ENCODE measurements at regions of chr14 and their contacts with region 1.

Region 1: DNA sequence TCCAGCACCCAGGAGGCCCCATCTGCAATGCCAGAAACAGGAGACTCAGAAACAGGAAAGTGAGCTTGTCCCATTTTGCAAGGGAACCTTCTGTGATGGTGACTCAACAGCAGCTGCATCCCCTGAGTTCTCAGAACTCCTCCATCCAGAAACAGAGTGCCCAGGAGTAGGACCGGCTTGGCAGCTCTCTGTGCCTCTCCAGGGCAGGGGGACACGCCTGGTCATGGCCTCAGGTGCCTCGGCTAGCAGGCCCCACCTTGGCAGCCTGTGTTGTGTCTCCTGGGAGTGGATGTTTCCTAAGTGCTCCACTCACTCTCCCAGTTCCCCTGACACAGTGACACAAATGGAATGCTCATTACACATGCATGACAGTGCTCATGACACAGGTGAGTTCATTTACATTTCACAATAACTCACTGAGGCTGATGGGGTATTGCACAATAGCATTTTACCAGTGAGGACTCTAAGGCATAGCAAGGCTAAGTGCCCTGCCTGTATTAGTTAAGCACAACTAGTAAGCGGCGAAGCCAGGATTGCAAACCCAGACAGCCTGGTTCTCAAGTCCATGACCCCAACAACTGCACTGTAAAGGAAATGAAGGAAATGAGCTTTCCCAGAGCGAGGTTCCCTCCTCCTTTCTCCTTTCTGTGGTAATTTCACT is 47.3 kb downstream of the CALM1 start:
- DNase-seq: peak; percentile 93
- H3K4me3 ChIP-seq: no peak overlapping the region
- H3K27ac ChIP-seq: peak overlapping the region; percentile 98
- H3K4me1 ChIP-seq: peaks cover 48% of the 10 kb centered on the region
- H3K27me3 ChIP-seq: no peaks in the 10 kb centered on the region
- CTCF ChIP-seq: no peak

Region 2: GRCh38 chr14:90409209-90409730 is 34.9 kb before region 1 on chr14:
- CTCF ChIA-PET with region 1: interaction called, 6 read pairs
- POLR2A ChIA-PET with region 1: interaction called, 7 read pairs
- intact Hi-C with region 1: loop called (anchors 2 kb)
- DNase-seq: peak; percentile 94
- H3K4me3 ChIP-seq: no peak overlapping the region
- H3K27ac ChIP-seq: peak overlapping the region; percentile 89
- H3K4me1 ChIP-seq: peaks cover 55% of the 10 kb centered on the region
- H3K27me3 ChIP-seq: no peaks in the 10 kb centered on the region
- CTCF ChIP-seq: no peak

Measured in A673 (cell line).